ENCODE measurements at regions of chr11 and their contacts with region 1.

Region 1: GRCh38 chr11:910589-911195 is at the start of gene CHID1:
- DNase-seq: peak; percentile 99
- CTCF ChIP-seq: peak; percentile 4

Region 2: GRCh38 chr11:925496-926321 is 15.0 kb after region 1 on chr11 and contains the start of gene AP2A2:
- CTCF ChIA-PET with region 1: interaction called, 13 read pairs
- POLR2A ChIA-PET with region 1: no interaction called
- DNase-seq: peak; percentile 96
- CTCF ChIP-seq: peak; percentile 94